ENCODE measurements at regions of chr2 and their contacts with region 1.

Region 1: GRCh38 chr2:107936433-107937359 is 49.6 kb upstream of the SLC5A7 start:
- DNase-seq: peak in 1 of 2 experiments; percentile 23
- H3K4me3 ChIP-seq: no peak overlapping the region
- H3K4me1 ChIP-seq: no peaks in the 10 kb centered on the region
- H3K27me3 ChIP-seq: no peaks in the 10 kb centered on the region

Region 2: GRCh38 chr2:108184419-108184818 is 247.7 kb after region 1 on chr2:
- in situ Hi-C with region 1: loop called (anchors 25 kb)
- DNase-seq: peak; percentile 6 to 18
- H3K4me3 ChIP-seq: no peak overlapping the region
- H3K4me1 ChIP-seq: no peaks in the 10 kb centered on the region
- H3K27me3 ChIP-seq: no peaks in the 10 kb centered on the region

Region 3: DNA sequence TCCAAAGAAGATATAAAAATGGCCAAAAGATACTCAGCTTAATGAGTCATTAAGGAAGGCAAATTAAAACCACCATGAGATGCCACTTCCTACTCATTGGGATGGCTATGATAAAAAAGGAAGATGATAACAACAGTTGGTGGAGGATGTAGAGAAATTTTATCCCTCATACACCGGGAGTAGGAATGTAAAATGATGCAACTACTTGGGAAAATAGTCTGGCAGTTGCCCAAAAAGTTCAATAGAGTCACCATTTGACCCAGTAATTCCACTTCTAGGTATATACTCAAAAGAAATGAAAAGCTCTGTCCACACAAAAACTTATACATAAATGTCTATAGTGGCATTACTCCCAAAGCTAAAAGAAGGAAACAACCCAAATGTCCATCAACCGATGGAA is 341.9 kb after region 1 on chr2:
- in situ Hi-C with region 1: no loop called
- DNase-seq: no peak
- H3K4me3 ChIP-seq: no peak overlapping the region
- H3K4me1 ChIP-seq: no peaks in the 10 kb centered on the region
- H3K27me3 ChIP-seq: no peaks in the 10 kb centered on the region

Region 4: GRCh38 chr2:108583903-108584520 is 647.3 kb after region 1 on chr2:
- in situ Hi-C with region 1: loop called (anchors 25 kb)
- DNase-seq: peak; percentile 59 to 69
- H3K4me3 ChIP-seq: no peak overlapping the region
- H3K4me1 ChIP-seq: no peaks in the 10 kb centered on the region
- H3K27me3 ChIP-seq: no peaks in the 10 kb centered on the region